Ovary (tissue), 10 donors: ENCODE measurements at regions of chr5 and their contacts with region 1.

Region 1: GRCh38 chr5:91126448-91126847 is 256.7 kb downstream of the ARRDC3 start:
- DNase-seq: peak in 1 of 5 donors; percentile 31
- H3K4me3 ChIP-seq: no peak overlapping the region
- H3K27ac ChIP-seq: peak overlapping the region in 1 of 2 donors; percentile 47
- H3K4me1 ChIP-seq: peaks cover 16% of the 10 kb centered on the region
- H3K27me3 ChIP-seq: no peaks in the 10 kb centered on the region
- CTCF ChIP-seq: no peak
- EP300 ChIP-seq: no peak
- POLR2A ChIP-seq: no peak

Region 2: GRCh38 chr5:91170266-91170665 is 43.8 kb after region 1 on chr5:
- intact Hi-C with region 1: no loop called
- DNase-seq: no peak
- H3K4me3 ChIP-seq: no peak overlapping the region
- H3K27ac ChIP-seq: no peak overlapping the region
- H3K4me1 ChIP-seq: no peaks in the 10 kb centered on the region
- H3K27me3 ChIP-seq: no peaks in the 10 kb centered on the region
- CTCF ChIP-seq: no peak
- EP300 ChIP-seq: no peak
- POLR2A ChIP-seq: no peak

Region 3: DNA sequence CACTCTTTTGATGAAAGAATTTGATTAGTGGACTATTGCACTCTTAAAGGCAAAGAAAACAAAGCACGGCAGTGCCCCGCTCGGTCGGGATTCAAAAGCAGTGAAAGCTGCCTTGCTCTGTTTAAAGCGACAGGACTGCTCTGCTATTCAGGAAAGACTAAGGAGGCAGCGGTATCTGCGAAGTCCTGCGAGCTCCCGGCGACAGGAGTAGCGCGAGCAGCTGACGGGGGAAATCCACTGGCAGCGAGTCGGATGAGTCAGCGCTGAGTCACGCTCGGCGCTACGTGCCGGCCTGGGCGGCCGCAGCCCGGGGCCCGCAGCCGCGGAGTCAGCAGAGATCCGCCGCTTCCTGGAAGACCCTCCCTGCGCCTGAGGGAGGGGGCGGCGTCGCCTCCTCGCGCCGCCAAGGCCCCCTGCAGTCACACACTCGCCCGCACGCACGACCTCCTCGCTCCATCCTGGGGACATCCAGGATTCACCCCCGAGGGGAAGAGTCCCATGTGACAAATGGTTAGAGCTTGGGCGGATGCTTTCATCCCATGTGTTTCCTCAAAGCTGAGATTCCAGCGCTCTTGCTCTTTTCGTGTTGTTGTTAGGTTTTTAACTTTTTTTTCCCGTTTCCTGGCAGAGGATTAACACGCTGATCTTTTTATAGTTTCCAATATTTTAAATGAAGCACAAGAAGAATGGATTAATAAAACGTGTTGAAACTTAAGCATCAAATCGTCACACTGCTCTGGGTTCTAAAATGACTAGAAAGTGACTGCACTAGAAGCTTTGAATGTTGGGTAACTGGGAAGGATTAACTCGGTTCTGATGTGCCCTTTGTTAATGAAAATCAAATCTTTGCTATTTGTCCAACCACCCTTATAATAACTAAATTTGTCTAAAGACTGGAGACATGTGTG is 154.2 kb after region 1 on chr5:
- intact Hi-C with region 1: loop called in 1 of 4 experiments (anchors 10 kb)
- DNase-seq: peak; percentile 93 to 95 (median 94)
- H3K4me3 ChIP-seq: peak overlapping the region; percentile 62
- H3K27ac ChIP-seq: peak overlapping the region; percentile 22 to 77
- H3K4me1 ChIP-seq: no peaks in the 10 kb centered on the region
- H3K27me3 ChIP-seq: no peaks in the 10 kb centered on the region
- CTCF ChIP-seq: no peak
- EP300 ChIP-seq: peak; percentile 37
- POLR2A ChIP-seq: peak; percentile 48

Region 4: DNA sequence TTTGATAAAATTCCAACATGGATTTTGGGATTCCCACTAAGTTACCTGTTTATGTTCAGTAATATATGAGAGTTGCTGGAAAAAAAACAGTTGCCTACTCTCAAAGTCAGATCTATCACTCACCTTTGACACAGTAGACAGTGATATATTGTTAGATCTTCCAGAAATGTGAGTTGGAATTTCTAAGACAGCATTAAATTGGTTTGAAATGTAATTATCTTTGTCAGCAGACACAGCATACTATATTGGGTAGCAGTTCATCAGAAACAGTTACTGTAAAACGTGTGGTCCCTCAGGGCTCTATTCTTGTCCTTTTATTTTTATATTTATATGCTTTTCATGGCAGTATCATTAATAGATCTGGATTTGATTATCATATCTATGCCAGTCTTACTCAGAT is 690.2 kb after region 1 on chr5:
- intact Hi-C with region 1: no loop called
- DNase-seq: no peak
- H3K4me3 ChIP-seq: no peak overlapping the region
- H3K27ac ChIP-seq: no peak overlapping the region
- H3K4me1 ChIP-seq: no peaks in the 10 kb centered on the region
- H3K27me3 ChIP-seq: no peaks in the 10 kb centered on the region
- CTCF ChIP-seq: no peak
- EP300 ChIP-seq: no peak
- POLR2A ChIP-seq: no peak

Region 5: GRCh38 chr5:92104126-92104525 is 977.7 kb after region 1 on chr5:
- intact Hi-C with region 1: no loop called
- DNase-seq: no peak
- H3K4me3 ChIP-seq: no peak overlapping the region
- H3K27ac ChIP-seq: no peak overlapping the region
- H3K4me1 ChIP-seq: no peaks in the 10 kb centered on the region
- H3K27me3 ChIP-seq: no peaks in the 10 kb centered on the region
- CTCF ChIP-seq: no peak
- EP300 ChIP-seq: no peak
- POLR2A ChIP-seq: no peak